BJ (cell line): ENCODE measurements at regions of chr13 and their contacts with region 1.

Region 1: GRCh38 chr13:98189841-98190505 is 12.9 kb upstream of the RNF113B start:
- DNase-seq: no peak
- H3K4me3 ChIP-seq: no peak overlapping the region
- H3K27me3 ChIP-seq: no peaks in the 10 kb centered on the region
- CTCF ChIP-seq: no peak

Region 2: GRCh38 chr13:97967948-97968347 is 222.0 kb before region 1 on chr13:
- CTCF ChIA-PET with region 1: no interaction called
- POLR2A ChIA-PET with region 1: no interaction called
- DNase-seq: no peak
- H3K4me3 ChIP-seq: no peak overlapping the region
- H3K27me3 ChIP-seq: no peaks in the 10 kb centered on the region
- CTCF ChIP-seq: no peak

Region 3: GRCh38 chr13:98155475-98156109 is 34.4 kb before region 1 on chr13:
- CTCF ChIA-PET with region 1: no interaction called
- POLR2A ChIA-PET with region 1: interaction called, 13 read pairs
- DNase-seq: no peak
- H3K4me3 ChIP-seq: no peak overlapping the region
- H3K27me3 ChIP-seq: no peaks in the 10 kb centered on the region
- CTCF ChIP-seq: no peak

Region 4: DNA sequence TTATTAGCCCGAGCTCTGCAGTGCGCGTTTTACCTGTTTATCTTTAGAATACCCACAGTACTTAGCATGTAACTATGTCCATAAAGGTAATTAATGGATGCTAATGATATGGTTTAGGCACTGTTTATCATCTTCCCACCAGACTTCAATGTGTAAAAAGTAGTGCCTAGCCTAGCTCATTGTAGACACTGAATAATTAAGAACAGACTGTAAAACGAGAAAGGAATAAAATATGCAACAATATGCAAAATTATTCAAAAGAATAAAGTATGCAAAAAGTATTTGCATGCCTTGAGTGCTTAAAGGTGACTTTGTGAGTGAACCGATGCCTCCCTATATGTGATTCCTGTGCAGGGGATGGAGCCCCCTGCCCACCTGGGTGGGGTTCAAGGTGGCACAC is 22.8 kb after region 1 on chr13:
- CTCF ChIA-PET with region 1: no interaction called
- POLR2A ChIA-PET with region 1: no interaction called
- DNase-seq: no peak
- H3K4me3 ChIP-seq: no peak overlapping the region
- H3K27me3 ChIP-seq: no peaks in the 10 kb centered on the region
- CTCF ChIP-seq: no peak